ENCODE measurements at regions of chr14 and their contacts with region 1.

Region 1: DNA sequence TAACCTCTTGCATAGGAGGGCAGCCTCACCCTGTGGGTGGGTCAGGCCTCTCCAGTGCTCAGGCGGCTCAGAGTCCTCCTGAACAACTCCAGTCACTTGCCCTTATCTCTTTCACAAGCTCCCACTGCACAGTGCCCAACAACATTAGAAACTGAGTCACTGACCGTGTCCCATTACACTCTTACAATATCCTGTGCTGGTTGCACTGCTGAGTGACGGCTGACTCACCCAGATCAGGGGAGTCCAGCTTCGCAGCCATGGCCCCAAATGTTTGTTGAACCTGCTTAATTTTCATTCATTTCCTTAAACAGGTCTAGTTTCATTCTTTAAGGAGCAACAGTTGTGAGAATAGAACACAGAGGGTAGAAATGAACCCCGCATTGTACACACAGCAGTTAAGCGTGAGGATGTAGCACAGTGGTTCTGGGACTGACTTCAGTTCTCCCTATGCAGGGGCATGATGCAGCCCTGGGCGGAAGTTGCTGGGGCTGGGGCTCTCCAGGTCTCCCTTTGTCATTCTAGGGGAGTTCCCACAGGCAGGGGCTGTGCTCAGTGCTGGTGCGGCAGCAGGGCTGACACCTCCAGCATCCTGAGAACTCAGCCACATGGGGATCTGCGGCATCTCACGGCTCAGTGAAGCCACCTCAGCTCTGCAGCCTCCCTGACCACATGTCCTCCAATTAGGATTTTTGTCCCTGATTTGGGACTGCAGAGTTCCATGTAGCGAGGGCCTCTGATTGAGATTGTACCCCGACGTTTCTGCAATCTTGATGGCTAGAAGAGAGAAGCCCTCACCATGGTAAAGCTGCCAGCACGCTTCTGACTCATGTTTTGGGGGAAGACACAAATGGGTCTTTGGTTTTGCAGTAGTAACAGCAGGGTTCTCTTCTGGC is 16.1 kb downstream of the GPR68 start:
- DNase-seq: peak; percentile 94
- ATAC-seq: peak; percentile 72
- H3K4me3 Mint-ChIP-seq: peak overlapping the region; percentile 59
- H3K27ac Mint-ChIP-seq: peak overlapping the region; percentile 98
- H3K4me1 Mint-ChIP-seq: peaks cover 92% of the 10 kb centered on the region
- H3K27me3 Mint-ChIP-seq: no peaks in the 10 kb centered on the region

Region 2: DNA sequence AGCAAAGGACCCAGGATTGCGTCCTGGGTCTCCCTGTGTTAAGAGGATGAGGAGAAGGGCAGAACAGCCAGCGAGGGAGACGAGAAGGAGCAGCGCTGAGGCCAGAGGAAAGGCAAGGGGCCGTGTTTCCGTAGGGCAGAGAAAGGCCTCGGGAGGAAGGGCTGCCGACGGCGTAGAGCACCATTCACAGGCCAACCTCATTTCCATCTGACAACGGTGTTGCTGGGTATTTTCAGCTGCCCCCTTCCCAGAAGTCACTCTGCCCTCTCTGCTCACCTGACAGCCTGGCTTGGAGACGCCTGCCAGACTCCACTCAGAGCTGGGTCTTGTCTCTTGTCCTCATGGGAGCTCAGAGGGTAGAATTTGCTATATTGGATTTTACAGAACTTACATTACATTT is 35.3 kb before region 1 on chr14:
- CTCF ChIA-PET with region 1: interaction called, 20 read pairs
- DNase-seq: no peak
- ATAC-seq: no peak
- H3K4me3 Mint-ChIP-seq: no peak overlapping the region
- H3K27ac Mint-ChIP-seq: no peak overlapping the region
- H3K4me1 Mint-ChIP-seq: peaks cover 44% of the 10 kb centered on the region
- H3K27me3 Mint-ChIP-seq: no peaks in the 10 kb centered on the region

Region 3: GRCh38 chr14:91244501-91244901 is 16.1 kb after region 1 on chr14 and contains the start of gene GPR68:
- CTCF ChIA-PET with region 1: interaction called, 98 read pairs
- DNase-seq: peak; percentile 72
- ATAC-seq: peak; percentile 12
- H3K4me3 Mint-ChIP-seq: peak within 1 kb of the TSS; percentile 86
- H3K27ac Mint-ChIP-seq: peak within 1 kb of the TSS; percentile 100
- H3K4me1 Mint-ChIP-seq: peaks cover 84% of the 10 kb centered on the region
- H3K27me3 Mint-ChIP-seq: no peaks in the 10 kb centered on the region
- total RNA-seq, gene GPR68: 44.5 to 48.0 TPM

Region 4: DNA sequence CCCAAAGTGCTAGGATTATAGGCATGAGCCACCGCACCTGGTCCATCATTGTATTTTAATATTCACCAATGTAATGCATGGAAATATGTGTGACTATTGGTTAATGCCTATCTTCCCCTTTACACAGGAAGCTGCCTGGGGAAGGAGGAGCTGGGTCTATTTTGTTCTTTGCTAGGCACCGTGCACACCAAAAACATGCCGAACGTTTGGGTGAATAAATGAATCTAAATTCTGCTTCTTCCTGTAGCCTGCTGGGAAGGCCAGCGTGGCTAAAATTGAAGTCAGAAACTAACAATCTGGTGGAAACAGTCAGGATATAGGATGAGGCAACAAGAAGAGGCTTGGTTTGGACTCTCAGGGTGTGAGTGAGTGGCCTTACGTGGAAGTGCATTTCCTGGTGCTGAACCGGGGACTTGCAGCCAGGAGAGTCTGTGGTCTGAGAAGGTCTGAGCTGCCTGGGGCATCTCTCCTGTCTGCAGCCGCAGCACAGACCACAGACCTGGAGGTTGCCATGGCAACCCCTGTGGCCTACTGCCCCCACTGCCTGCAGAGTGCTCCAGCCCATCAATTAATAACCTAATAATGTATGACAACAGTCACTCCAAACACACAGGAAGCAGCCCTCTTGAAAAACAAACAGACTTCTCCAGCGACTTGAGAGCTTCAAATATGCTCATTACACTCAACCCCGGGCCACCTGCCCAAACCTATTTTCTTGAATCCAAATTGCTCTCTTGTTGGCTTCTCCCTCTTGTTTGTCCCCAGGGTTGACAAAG is 21.7 kb after region 1 on chr14:
- CTCF ChIA-PET with region 1: interaction called, 98 read pairs
- DNase-seq: peak; percentile 91
- ATAC-seq: peak; percentile 40
- H3K4me3 Mint-ChIP-seq: peak overlapping the region; percentile 40
- H3K27ac Mint-ChIP-seq: peak overlapping the region; percentile 100
- H3K4me1 Mint-ChIP-seq: peaks cover 91% of the 10 kb centered on the region
- H3K27me3 Mint-ChIP-seq: no peaks in the 10 kb centered on the region

Region 5: GRCh38 chr14:91264151-91265150 is 36.1 kb after region 1 on chr14:
- CTCF ChIA-PET with region 1: no interaction called
- DNase-seq: no peak
- ATAC-seq: peak; percentile 59
- H3K4me3 Mint-ChIP-seq: peak overlapping the region; percentile 38
- H3K27ac Mint-ChIP-seq: peak overlapping the region; percentile 49
- H3K4me1 Mint-ChIP-seq: peaks cover 45% of the 10 kb centered on the region
- H3K27me3 Mint-ChIP-seq: no peaks in the 10 kb centered on the region

Measured in activated CD8-positive, alpha-beta memory T cell treated with anti-CD3 and anti-CD28 coated beads, Interleukin-2, amount 10 ng/mL, durations not matched to agents 7 days and 5 days (primary cell).